Heart left ventricle (tissue), 16 donors: ENCODE measurements at regions of chr1 and their contacts with region 1.

Region 1: GRCh38 chr1:151701515-151701914 is 15.1 kb downstream of the CELF3 start:
- DNase-seq: no peak
- ATAC-seq: no peak
- H3K4me3 ChIP-seq: no peak overlapping the region
- H3K27ac ChIP-seq: no peak overlapping the region
- H3K4me1 ChIP-seq: no peaks in the 10 kb centered on the region
- H3K27me3 ChIP-seq: no peaks in the 10 kb centered on the region
- CTCF ChIP-seq: no peak
- POLR2A ChIP-seq: no peak

Region 2: GRCh38 chr1:151611832-151612500 is 89.5 kb before region 1 on chr1 and contains the start of gene SNX27:
- intact Hi-C with region 1: no loop called
- DNase-seq: peak; percentile 93 to 94 (median 94)
- ATAC-seq: peak; percentile 96 to 97 (median 97)
- H3K4me3 ChIP-seq: peak within 1 kb of the TSS; percentile 56 to 100 (median 89)
- H3K27ac ChIP-seq: peak within 1 kb of the TSS; percentile 40 to 98 (median 94)
- H3K4me1 ChIP-seq: peaks cover 0 to 55% (median 10%) of the 10 kb centered on the region in 12 donors
- H3K27me3 ChIP-seq: no peaks in the 10 kb centered on the region
- CTCF ChIP-seq: peak in 1 of 12 donors; percentile 14
- POLR2A ChIP-seq: peak in 1 of 2 donors; percentile 85
- total RNA-seq, gene SNX27: 21.6 to 39.4 (median 33.2) TPM

Region 3: DNA sequence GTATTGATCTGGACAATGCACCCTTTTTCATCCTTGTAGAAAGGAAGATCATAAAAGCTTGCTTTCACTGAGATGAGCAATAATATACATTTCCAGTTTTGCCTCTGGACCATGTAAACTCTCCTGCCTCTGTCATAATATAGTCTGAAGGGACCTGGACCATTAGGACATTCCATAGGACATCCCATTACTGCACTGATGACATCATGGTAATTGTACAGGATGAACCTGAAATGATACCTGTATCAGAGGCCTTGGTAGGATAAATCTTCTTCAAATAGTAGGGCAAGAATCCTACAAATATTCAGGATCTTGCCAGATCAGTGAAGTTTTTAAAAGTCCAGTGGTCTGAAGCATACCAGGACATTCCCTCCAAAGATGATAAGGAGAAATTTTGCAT is 52.7 kb after region 1 on chr1:
- intact Hi-C with region 1: loop called in 1 of 10 experiments (anchors 2 kb)
- DNase-seq: no peak
- ATAC-seq: no peak
- H3K4me3 ChIP-seq: no peak overlapping the region
- H3K27ac ChIP-seq: no peak overlapping the region
- H3K4me1 ChIP-seq: no peaks in the 10 kb centered on the region
- H3K27me3 ChIP-seq: no peaks in the 10 kb centered on the region
- CTCF ChIP-seq: no peak
- POLR2A ChIP-seq: no peak